CD4-positive, alpha-beta T cell (primary cell): ENCODE measurements at regions of chr12 and their contacts with region 1.

Region 1: GRCh38 chr12:8045952-8046944 is 13.7 kb downstream of the FOXJ2 start:
- DNase-seq: peak; percentile 71 to 92 (median 82)
- ATAC-seq: peak; percentile 90
- H3K4me3 ChIP-seq: no peak overlapping the region
- H3K4me3 Mint-ChIP-seq: no peak overlapping the region
- H3K27ac ChIP-seq: no peak overlapping the region
- H3K27ac Mint-ChIP-seq: no peak overlapping the region
- H3K4me1 ChIP-seq: no peaks in the 10 kb centered on the region
- H3K4me1 Mint-ChIP-seq: peaks cover 10% of the 10 kb centered on the region
- H3K27me3 ChIP-seq: no peaks in the 10 kb centered on the region
- H3K27me3 Mint-ChIP-seq: no peaks in the 10 kb centered on the region
- CTCF ChIP-seq: peak; percentile 97

Region 2: GRCh38 chr12:7678738-7679137 is 367.5 kb before region 1 on chr12:
- CTCF ChIA-PET with region 1: no interaction called
- POLR2A ChIA-PET with region 1: no interaction called
- intact Hi-C with region 1: no loop called
- DNase-seq: no peak
- ATAC-seq: no peak
- H3K4me3 ChIP-seq: no peak overlapping the region
- H3K4me3 Mint-ChIP-seq: no peak overlapping the region
- H3K27ac ChIP-seq: no peak overlapping the region
- H3K27ac Mint-ChIP-seq: no peak overlapping the region
- H3K4me1 ChIP-seq: no peaks in the 10 kb centered on the region
- H3K4me1 Mint-ChIP-seq: peaks cover 7% of the 10 kb centered on the region
- H3K27me3 ChIP-seq: peaks cover 0 to 4% of the 10 kb centered on the region in 2 experiments
- H3K27me3 Mint-ChIP-seq: peaks cover 19% of the 10 kb centered on the region
- CTCF ChIP-seq: no peak

Region 3: DNA sequence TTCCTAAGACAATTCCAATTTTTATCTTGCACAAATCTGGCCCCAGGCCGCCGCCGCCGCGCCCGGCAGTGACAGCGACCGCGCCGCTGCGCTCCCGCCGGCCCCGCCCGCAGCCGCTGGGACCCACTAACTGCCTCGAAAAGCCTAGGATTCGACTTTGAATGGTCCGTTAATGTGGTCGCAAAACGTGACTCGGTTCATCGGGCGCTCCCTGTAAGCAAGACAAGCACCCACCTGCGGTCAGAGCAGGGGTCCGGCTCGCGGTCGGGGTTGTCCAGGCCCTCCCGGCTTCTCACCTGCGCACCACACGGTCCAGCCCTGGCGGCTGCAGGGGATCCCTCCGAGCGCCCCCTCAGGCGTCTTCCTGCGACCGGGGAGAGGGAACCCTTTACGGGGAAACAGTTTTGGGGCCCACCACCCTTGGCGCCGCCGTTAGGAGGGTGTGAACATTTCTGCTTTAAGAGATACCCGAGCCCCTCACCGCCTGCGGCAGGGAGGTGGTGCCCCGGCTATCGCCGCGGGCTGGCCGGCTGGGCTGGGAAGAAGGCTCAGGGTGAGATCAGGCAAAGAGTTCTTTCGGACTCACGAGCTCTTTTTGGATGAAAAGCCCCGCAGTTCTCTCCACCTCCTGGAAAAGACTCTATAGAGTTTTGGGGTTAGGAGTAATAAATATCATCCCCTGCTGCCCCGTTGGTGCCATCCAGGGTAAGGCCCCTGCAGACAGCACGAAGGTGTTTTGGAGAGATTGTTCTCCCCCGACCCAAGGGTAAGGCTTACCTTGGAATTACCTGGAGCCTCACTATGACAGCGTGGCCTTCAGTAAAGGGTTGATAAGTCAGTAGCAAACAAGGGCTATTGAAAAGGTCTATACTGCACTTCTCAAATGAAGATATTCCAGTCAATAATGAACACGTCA is 27.3 kb before region 1 on chr12:
- CTCF ChIA-PET with region 1: no interaction called
- POLR2A ChIA-PET with region 1: no interaction called
- intact Hi-C with region 1: no loop called
- DNase-seq: peak in 4 of 14 experiments; percentile 10 to 38 (median 36)
- ATAC-seq: peak; percentile 43
- H3K4me3 ChIP-seq: peak overlapping the region; percentile 52
- H3K4me3 Mint-ChIP-seq: peak overlapping the region; percentile 65
- H3K27ac ChIP-seq: no peak overlapping the region
- H3K27ac Mint-ChIP-seq: no peak overlapping the region
- H3K4me1 ChIP-seq: peaks cover 14% of the 10 kb centered on the region
- H3K4me1 Mint-ChIP-seq: peaks cover 5% of the 10 kb centered on the region
- H3K27me3 ChIP-seq: peaks cover 11 to 19% of the 10 kb centered on the region in 2 experiments
- H3K27me3 Mint-ChIP-seq: peaks cover 33% of the 10 kb centered on the region
- CTCF ChIP-seq: no peak

Region 4: GRCh38 chr12:8065991-8066594 is 19.8 kb after region 1 on chr12 and contains the start of gene C3AR1:
- CTCF ChIA-PET with region 1: interaction called, 12 read pairs
- POLR2A ChIA-PET with region 1: interaction called, 4 read pairs
- intact Hi-C with region 1: no loop called
- DNase-seq: peak in 13 of 14 experiments; percentile 16 to 88 (median 47)
- ATAC-seq: peak; percentile 97
- H3K4me3 ChIP-seq: peak within 1 kb of the TSS; percentile 19
- H3K4me3 Mint-ChIP-seq: peak within 1 kb of the TSS; percentile 47
- H3K27ac ChIP-seq: peak within 1 kb of the TSS; percentile 47 to 48
- H3K27ac Mint-ChIP-seq: peak within 1 kb of the TSS; percentile 91
- H3K4me1 ChIP-seq: peaks cover 23% of the 10 kb centered on the region
- H3K4me1 Mint-ChIP-seq: peaks cover 32% of the 10 kb centered on the region
- H3K27me3 ChIP-seq: no peaks in the 10 kb centered on the region
- H3K27me3 Mint-ChIP-seq: no peaks in the 10 kb centered on the region
- CTCF ChIP-seq: no peak
- total RNA-seq, gene C3AR1: 1.4 TPM